Posterior cingulate gyrus (tissue), 11 donors: ENCODE measurements at regions of chr21 and their contacts with region 1.

Region 1: DNA sequence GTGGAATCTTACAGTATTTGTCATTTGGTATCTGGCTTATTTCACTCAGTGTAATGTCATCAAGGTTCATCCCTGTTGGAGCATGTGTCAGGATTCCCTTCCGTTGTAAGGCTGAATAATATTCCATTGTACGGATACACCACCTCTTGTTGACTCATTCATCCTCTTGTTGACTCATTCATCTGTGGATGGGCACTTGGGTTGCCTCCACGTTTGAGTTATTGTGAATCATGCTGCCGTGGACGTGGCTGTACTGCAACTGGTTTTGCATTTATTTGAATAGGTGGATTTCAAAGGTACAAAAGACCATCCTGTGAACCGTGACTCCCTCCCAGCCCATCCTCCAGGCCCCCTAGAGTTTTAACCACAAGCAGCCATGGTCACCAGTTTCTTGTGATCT is 11.9 kb upstream of the TCP10L start:
- DNase-seq: peak in 1 of 10 donors; percentile 52

Region 2: GRCh38 chr21:32403201-32403777 is 193.9 kb before region 1 on chr21:
- intact Hi-C with region 1: loop called (anchors 2 kb)
- DNase-seq: peak in 7 of 10 donors; percentile 60 to 93 (median 61)

Region 3: GRCh38 chr21:32448803-32449594 is 148.2 kb before region 1 on chr21:
- intact Hi-C with region 1: no loop called
- DNase-seq: peak in 1 of 10 donors; percentile 3

Region 4: DNA sequence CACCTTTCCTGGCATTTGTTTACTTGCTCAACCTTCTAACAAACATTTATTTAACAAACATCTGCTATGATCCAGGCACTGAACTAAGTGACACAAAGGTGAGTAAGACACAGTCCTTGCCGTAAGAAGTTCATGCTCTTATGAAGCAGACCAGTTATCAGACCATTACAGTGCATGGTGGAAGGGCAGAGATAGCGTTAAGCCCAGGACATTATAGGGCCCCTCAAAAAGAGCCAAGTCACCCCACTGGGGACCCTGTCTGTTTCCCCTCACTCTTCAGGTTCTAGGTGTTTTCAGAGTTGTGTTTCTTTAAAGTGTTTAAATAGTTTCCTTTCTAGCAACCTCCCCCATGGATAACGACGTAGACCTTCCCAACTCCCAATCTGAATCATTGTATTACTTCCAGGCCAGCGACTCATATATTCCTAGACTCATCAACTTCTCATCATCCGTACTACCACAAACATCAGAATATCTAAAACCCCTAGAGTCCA is 51.2 kb before region 1 on chr21:
- intact Hi-C with region 1: no loop called
- DNase-seq: no peak

Region 5: DNA sequence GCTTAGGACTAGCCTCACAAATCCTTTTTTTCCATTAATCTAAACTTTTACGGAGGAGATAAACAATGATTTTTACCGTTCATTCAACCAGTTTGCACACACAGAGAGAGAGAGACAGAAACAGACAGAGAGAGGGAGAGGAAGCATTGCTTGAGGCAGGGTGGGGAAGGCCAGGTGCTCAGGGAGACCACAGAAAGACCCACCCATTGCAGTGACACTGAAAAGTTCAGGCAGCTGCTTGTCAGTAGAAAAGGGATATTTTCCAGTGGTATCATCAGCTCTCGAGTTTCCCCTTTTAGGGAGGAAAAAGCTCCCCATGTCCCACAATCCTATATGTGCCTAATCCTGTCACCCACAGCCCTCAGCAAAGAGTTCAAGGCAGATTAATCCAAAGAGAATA is 39.1 kb before region 1 on chr21:
- intact Hi-C with region 1: no loop called
- DNase-seq: no peak